Left cardiac atrium (tissue), 4 donors: ENCODE measurements at regions of chr7 and their contacts with region 1.

Region 1: DNA sequence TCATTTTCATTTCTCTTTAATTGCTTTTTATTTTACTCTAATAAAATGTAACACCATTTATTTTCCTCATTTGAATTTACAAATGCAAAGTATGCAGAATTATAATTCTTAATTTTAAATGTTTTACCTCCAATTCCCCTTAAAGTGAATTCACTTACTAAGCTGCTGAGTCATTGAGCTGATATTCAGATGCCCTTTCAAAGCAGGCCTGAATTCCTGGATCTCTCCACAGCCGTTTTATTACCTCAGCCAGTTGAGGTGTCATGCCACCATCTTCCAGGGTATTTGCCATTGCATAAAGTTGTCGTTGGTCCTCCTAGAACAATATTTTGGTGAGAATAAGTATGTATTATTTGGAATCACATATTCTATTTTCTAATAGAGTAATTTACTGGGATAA is 33.2 kb downstream of the GNAT3 start:
- DNase-seq: no peak
- ATAC-seq: peak; percentile 38 to 54

Region 2: DNA sequence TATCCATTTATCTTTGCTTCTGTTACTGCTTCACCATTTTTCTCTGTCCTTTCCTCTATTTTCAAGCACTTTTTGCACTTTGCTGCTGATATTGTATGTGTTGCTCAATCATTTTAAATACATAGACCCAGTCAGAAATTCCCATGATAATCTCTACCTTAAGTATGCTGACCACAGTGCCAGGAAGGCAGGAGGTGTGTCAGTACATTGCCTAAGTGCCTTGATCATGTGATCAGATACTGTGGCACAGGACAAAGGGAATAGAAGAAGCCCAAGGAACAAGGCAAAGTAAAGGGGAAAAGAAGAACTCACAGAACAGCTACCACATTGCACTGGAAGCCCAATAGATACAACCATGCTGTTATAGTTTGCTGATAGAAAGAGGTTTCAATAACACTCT is 106.1 kb after region 1 on chr7:
- intact Hi-C with region 1: loop called in 1 of 2 experiments (anchors 10 kb)
- DNase-seq: no peak
- ATAC-seq: peak in 1 of 2 donors; percentile 53